Mammary epithelial cell (primary cell): ENCODE measurements at regions of chr7 and their contacts with region 1.

Region 1: DNA sequence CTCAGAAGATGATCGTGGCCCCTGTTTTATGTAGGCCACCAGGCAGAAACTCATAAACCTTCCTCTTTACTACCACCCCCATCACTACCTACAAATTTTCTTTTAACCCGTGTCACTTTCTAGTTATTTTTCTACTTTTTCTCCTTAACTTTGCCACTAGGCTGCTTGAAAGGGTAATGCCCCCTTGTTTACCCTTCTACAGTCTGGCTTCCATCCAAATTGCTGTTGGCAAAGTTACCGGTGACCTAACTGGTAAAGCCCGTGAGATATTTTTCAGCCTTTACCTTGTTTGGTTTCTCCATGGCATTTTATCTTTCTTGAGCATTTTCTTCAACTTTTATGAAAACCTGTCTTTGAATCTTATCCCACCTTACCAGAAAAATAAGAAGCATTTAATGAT is 153.0 kb downstream of the WNT2 start:
- DNase-seq: peak; percentile 17
- H3K4me3 ChIP-seq: no peak overlapping the region
- H3K27ac ChIP-seq: no peak overlapping the region
- H3K4me1 ChIP-seq: no peaks in the 10 kb centered on the region
- H3K27me3 ChIP-seq: no peaks in the 10 kb centered on the region
- CTCF ChIP-seq: no peak

Region 2: GRCh38 chr7:117616694-117617093 is 446.8 kb after region 1 on chr7:
- CTCF ChIA-PET with region 1: interaction called, 12 read pairs
- dilution Hi-C with region 1: no loop called
- in situ Hi-C with region 1: no loop called
- intact Hi-C with region 1: no loop called
- DNase-seq: no peak
- H3K4me3 ChIP-seq: no peak overlapping the region
- H3K27ac ChIP-seq: no peak overlapping the region
- H3K4me1 ChIP-seq: no peaks in the 10 kb centered on the region
- H3K27me3 ChIP-seq: peaks cover 3% of the 10 kb centered on the region
- CTCF ChIP-seq: no peak